A549 (cell line): ENCODE measurements at regions of chr12 and their contacts with region 1.

Region 1: GRCh38 chr12:27733052-27733656 is 22.5 kb downstream of the MRPS35 start:
- DNase-seq: peak; percentile 39 to 55
- ATAC-seq: peak; percentile 64 to 81; a peak in 4 of 6 replicates
- H3K4me3 ChIP-seq: no peak overlapping the region
- H3K27ac ChIP-seq: no peak overlapping the region
- H3K4me1 ChIP-seq: no peaks in the 10 kb centered on the region
- CTCF ChIP-seq: peak; percentile 93
- EP300 ChIP-seq: no peak
- POLR2A ChIP-seq: no peak
- RAD21 ChIP-seq: peak; percentile 94 to 95

Region 2: DNA sequence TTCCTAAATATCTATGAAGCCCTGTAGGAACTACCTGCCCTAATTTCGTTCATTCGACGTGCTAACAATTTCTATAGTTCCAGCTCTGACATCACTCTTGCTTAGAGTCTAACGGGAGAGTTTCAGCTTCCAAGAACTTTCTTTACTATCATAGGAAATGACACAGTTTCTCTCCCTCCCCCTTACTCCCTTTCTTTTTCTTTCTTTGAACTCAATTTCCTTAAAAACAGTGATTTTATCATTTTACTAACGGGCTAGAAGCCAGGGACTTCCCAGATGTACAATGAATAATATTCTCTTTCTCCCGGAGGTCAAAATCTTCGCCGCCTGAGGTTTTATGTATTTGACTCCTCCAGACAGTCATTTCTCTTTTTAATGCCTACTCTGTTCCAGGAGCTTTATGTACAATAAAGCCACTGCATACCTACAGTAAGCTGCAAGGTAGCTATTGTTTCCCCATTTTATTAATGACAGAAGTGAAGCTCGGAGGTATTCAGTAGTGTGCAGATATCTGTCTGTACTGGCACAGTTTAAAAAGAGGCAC is 270.9 kb before region 1 on chr12:
- CTCF ChIA-PET with region 1: no interaction called
- POLR2A ChIA-PET with region 1: no interaction called
- DNase-seq: peak in 1 of 2 experiments; percentile 16
- ATAC-seq: peak; percentile 57 to 58; a peak in 4 of 6 replicates
- H3K4me3 ChIP-seq: no peak overlapping the region
- H3K27ac ChIP-seq: peak overlapping the region; percentile 31 to 66; a peak in 4 of 6 replicates
- H3K4me1 ChIP-seq: peaks cover 35% of the 10 kb centered on the region
- CTCF ChIP-seq: no peak
- EP300 ChIP-seq: no peak
- POLR2A ChIP-seq: no peak
- RAD21 ChIP-seq: no peak

Region 3: GRCh38 chr12:27747111-27747820 is 14.1 kb after region 1 on chr12:
- CTCF ChIA-PET with region 1: interaction called, 19 read pairs
- POLR2A ChIA-PET with region 1: no interaction called
- DNase-seq: peak; percentile 31 to 53
- ATAC-seq: peak; percentile 76 to 90
- H3K4me3 ChIP-seq: no peak overlapping the region
- H3K27ac ChIP-seq: peak overlapping the region; percentile 81 to 82
- H3K4me1 ChIP-seq: peaks cover 56% of the 10 kb centered on the region
- CTCF ChIP-seq: no peak
- EP300 ChIP-seq: no peak
- POLR2A ChIP-seq: no peak
- RAD21 ChIP-seq: no peak

Region 4: GRCh38 chr12:28872654-28873268 is 1139.6 kb after region 1 on chr12:
- CTCF ChIA-PET with region 1: interaction called, 22 read pairs
- POLR2A ChIA-PET with region 1: no interaction called
- DNase-seq: peak; percentile 48 to 69
- ATAC-seq: peak; percentile 84 to 93; a peak in 5 of 6 replicates
- H3K4me3 ChIP-seq: no peak overlapping the region
- H3K27ac ChIP-seq: no peak overlapping the region
- H3K4me1 ChIP-seq: peaks cover 7% of the 10 kb centered on the region; the same call in 1 of the 3 replicates
- CTCF ChIP-seq: peak; percentile 71
- EP300 ChIP-seq: no peak
- POLR2A ChIP-seq: no peak
- RAD21 ChIP-seq: peak; percentile 89 to 90